Activated naive CD4-positive, alpha-beta T cell treated with anti-CD3 and anti-CD28 coated beads for 36 hours (primary cell): ENCODE measurements at regions of chr20 and their contacts with region 1.

Region 1: DNA sequence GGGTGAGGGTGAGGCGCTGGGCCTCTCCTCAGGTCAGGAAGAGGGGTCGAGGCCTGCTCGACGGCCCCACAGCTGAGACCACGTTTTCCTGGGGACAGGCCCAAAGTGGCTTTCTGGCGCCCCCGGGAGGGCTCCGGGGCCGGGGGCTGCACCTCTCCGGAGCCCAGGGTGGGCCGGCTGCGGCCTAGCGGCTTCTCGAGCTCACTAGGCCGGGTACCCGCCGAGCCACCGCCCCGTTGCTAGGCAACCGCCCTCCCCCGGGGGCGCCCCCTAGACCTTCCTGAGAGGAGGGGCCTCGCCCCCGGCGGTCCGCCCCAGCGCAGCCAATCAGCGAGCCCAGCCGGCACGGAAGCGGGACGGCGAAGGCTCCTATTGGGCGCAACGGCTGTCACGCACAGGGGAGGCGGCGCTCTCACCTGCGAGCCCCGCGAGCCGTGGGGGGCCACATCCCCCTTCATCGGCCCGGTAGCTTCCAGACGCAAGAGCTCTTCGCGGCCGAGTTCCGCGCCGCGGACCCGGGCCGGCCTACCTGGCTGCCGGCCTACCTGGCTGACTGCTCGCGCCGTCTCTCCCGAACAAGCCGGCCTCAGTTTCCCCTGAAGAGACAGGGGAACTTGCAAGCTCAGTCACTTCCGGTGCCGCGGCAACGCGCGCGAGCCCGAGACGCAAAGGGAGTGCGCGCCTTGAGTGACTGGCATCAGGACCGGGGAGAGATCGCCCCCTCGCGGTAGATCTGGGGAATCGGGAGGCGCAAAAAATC is 831 bp upstream of the BCL2L1 start:
- DNase-seq: peak; percentile 99
- H3K4me3 Mint-ChIP-seq: peak overlapping the region; percentile 95
- H3K27ac Mint-ChIP-seq: peak overlapping the region; percentile 99
- H3K4me1 Mint-ChIP-seq: peaks cover 5% of the 10 kb centered on the region
- H3K27me3 Mint-ChIP-seq: no peaks in the 10 kb centered on the region

Region 2: GRCh38 chr20:31514159-31515071 is 209.1 kb before region 1 on chr20 and contains the start of gene HM13:
- CTCF ChIA-PET with region 1: interaction called, 5 read pairs
- intact Hi-C with region 1: loop called (anchors 2 kb)
- DNase-seq: peak; percentile 89
- H3K4me3 Mint-ChIP-seq: no peak within 1 kb of the TSS
- H3K27ac Mint-ChIP-seq: peak within 1 kb of the TSS; percentile 1
- H3K4me1 Mint-ChIP-seq: peaks cover 9% of the 10 kb centered on the region
- H3K27me3 Mint-ChIP-seq: no peaks in the 10 kb centered on the region
- total RNA-seq, gene HM13: 67.3 to 69.4 TPM

Region 3: DNA sequence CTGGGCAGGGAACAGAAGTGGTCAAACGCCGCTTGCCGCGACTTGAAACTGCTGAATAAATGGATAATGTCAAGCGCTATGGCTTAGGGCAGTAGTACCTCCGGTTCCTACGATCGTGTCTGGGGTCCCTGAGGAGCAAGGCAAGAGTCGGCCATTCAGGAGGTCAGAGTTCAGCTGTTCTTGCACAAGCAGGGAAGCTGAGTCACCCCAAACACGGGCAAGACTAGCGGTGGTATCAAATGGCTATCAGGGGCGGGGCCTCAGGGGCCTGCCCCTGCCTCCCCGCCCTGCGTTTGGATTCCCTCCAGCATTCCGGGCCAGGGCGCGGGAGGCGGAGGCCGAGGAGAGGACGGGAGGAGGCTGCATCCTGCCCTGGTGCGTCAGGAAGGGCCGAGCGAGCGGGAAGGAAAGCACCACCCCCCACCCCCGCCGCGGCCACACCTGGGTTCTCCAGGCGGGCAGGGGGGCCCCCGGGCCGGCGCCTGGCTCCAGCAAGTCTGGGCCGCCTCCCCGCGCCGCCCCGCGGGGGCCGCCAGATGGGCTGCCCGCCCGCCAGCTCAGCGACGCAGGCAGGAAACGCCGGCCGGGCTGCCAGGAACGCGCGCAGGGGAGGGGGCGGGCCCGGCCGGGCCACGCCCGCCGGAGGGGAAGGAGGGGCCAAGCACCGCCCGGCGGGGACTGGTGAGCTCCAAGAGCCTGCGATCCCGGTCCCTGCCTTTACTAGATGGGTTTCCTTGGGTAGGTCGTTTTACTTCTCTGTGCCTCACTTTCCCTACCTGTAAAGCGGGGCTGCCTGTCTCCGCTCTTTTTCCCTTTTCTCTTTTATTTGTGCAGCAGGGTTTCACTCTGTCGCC is 150.6 kb before region 1 on chr20:
- CTCF ChIA-PET with region 1: interaction called, 5 read pairs
- intact Hi-C with region 1: loop called (anchors 1 kb)
- DNase-seq: peak; percentile 92
- H3K4me3 Mint-ChIP-seq: peak overlapping the region; percentile 86
- H3K27ac Mint-ChIP-seq: peak overlapping the region; percentile 85
- H3K4me1 Mint-ChIP-seq: peaks cover 23% of the 10 kb centered on the region
- H3K27me3 Mint-ChIP-seq: no peaks in the 10 kb centered on the region

Region 4: GRCh38 chr20:31661625-31662371 is 61.7 kb before region 1 on chr20:
- CTCF ChIA-PET with region 1: interaction called, 339 read pairs
- intact Hi-C with region 1: loop called (anchors 1 kb)
- DNase-seq: peak; percentile 84
- H3K4me3 Mint-ChIP-seq: peak overlapping the region; percentile 72
- H3K27ac Mint-ChIP-seq: peak overlapping the region; percentile 86
- H3K4me1 Mint-ChIP-seq: peaks cover 49% of the 10 kb centered on the region
- H3K27me3 Mint-ChIP-seq: no peaks in the 10 kb centered on the region

Region 5: DNA sequence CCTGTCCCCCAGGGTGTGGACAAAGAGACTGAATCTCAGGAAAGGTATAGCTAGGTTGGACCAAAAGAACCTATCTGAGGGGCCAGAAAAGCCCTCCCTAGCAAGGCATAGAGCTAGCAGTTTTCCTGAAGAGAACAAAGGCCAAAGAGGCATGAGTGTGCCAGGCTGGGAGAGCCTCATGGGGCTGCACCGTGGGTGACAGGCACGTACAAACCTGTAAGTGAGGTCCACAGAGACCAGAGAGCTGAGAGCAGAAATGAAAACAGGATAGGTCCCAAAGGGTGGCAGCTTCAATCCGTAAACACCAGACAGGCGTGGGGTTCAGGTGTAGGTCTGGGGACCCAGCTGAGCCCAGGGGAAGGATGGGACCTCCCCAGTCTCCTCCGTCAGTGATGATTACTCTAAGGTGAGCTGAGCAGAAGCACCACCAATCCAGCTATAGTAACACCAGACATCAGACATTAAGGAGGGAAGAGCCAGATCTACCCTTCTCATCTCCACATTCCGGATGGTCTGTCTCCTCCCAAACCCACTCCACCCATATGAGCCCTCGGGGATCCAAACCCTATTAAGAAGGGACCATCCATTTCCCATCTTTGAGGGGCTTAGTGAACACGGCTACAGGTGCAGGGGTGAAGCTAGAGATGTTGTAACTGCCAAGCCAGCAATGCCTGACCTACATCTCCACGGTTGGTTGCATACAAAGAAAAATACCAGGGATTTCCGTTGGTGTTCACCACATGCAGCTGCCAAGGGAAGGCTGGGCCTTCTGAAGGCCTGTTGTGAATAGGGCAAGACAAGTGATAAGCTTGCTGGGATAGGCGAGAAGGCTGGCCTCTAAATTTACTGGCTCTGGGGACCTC is 39.1 kb before region 1 on chr20:
- CTCF ChIA-PET with region 1: interaction called, 103 read pairs
- intact Hi-C with region 1: no loop called
- DNase-seq: no peak
- H3K4me3 Mint-ChIP-seq: no peak overlapping the region
- H3K27ac Mint-ChIP-seq: peak overlapping the region; percentile 70
- H3K4me1 Mint-ChIP-seq: peaks cover 78% of the 10 kb centered on the region
- H3K27me3 Mint-ChIP-seq: no peaks in the 10 kb centered on the region

Region 6: DNA sequence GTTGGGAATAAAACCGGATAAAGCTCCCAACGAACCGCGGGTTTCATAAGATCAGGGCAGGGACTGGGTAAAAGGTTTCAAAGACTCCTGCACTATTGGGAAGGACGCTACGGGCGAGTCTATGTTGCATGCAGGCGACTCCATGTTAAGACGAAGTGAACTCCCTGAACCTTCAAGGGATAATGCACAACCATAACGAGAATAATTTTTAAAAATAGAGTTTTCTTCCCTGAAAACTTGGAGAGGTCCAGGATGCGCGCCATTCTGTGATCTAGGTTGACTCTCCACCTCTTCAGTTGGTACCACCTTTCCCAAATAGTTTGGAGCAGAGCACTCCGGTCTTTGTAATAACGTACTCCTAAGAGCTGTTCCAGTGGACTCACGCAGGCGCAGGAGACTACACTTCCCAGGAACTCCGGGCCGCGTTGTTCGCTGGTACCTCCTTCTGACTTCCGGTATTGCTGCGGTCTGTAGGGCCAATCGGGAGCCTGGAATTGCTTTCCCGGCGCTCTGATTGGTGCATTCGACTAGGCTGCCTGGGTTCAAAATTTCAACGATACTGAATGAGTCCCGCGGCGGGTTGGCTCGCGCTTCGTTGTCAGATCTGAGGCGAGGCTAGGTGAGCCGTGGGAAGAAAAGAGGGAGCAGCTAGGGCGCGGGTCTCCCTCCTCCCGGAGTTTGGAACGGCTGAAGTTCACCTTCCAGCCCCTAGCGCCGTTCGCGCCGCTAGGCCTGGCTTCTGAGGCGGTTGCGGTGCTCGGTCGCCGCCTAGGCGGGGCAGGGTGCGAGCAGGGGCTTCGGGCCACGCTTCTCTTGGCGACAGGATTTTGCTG is 15.4 kb after region 1 on chr20 and contains the start of gene TPX2:
- CTCF ChIA-PET with region 1: interaction called, 15 read pairs
- intact Hi-C with region 1: loop called (anchors 1 kb)
- DNase-seq: peak; percentile 95
- H3K4me3 Mint-ChIP-seq: no peak within 1 kb of the TSS
- H3K27ac Mint-ChIP-seq: no peak within 1 kb of the TSS
- H3K4me1 Mint-ChIP-seq: peaks cover 4% of the 10 kb centered on the region
- H3K27me3 Mint-ChIP-seq: no peaks in the 10 kb centered on the region
- total RNA-seq, gene TPX2: 166 to 175 TPM